ENCODE measurements at regions of chr2 and their contacts with region 1.

Region 1: GRCh38 chr2:224561234-224562005 is 23.7 kb downstream of the CUL3 start:
- DNase-seq: no peak
- ATAC-seq: peak; percentile 61
- H3K4me3 Mint-ChIP-seq: no peak overlapping the region
- H3K27ac Mint-ChIP-seq: no peak overlapping the region
- H3K4me1 Mint-ChIP-seq: peaks cover 26% of the 10 kb centered on the region
- H3K27me3 Mint-ChIP-seq: no peaks in the 10 kb centered on the region
- CTCF ChIP-seq: no peak

Region 2: GRCh38 chr2:224576088-224576715 is 14.8 kb after region 1 on chr2:
- CTCF ChIA-PET with region 1: no interaction called
- POLR2A ChIA-PET with region 1: interaction called, 3 read pairs
- intact Hi-C with region 1: loop called (anchors 1 kb)
- DNase-seq: no peak
- ATAC-seq: peak; percentile 51
- H3K4me3 Mint-ChIP-seq: peak overlapping the region; percentile 52
- H3K27ac Mint-ChIP-seq: peak overlapping the region; percentile 9
- H3K4me1 Mint-ChIP-seq: peaks cover 93% of the 10 kb centered on the region
- H3K27me3 Mint-ChIP-seq: no peaks in the 10 kb centered on the region
- CTCF ChIP-seq: no peak